ENCODE measurements at regions of chr7 and their contacts with region 1.

Region 1: GRCh38 chr7:139620676-139621344 is 97.3 kb downstream of the CLEC2L start:
- DNase-seq: peak; percentile 69
- ATAC-seq: peak; percentile 78
- H3K4me3 Mint-ChIP-seq: no peak overlapping the region
- H3K27ac Mint-ChIP-seq: no peak overlapping the region
- H3K4me1 Mint-ChIP-seq: peaks cover 10% of the 10 kb centered on the region
- H3K27me3 Mint-ChIP-seq: no peaks in the 10 kb centered on the region

Region 2: GRCh38 chr7:139328375-139328774 is 292.4 kb before region 1 on chr7:
- CTCF ChIA-PET with region 1: no interaction called
- DNase-seq: no peak
- ATAC-seq: no peak
- H3K4me3 Mint-ChIP-seq: no peak overlapping the region
- H3K27ac Mint-ChIP-seq: no peak overlapping the region
- H3K4me1 Mint-ChIP-seq: peaks cover 8% of the 10 kb centered on the region
- H3K27me3 Mint-ChIP-seq: no peaks in the 10 kb centered on the region

Region 3: GRCh38 chr7:139502226-139502625 is 118.6 kb before region 1 on chr7:
- CTCF ChIA-PET with region 1: interaction called, 30 read pairs
- DNase-seq: no peak
- ATAC-seq: no peak
- H3K4me3 Mint-ChIP-seq: no peak overlapping the region
- H3K27ac Mint-ChIP-seq: no peak overlapping the region
- H3K4me1 Mint-ChIP-seq: peaks cover 6% of the 10 kb centered on the region
- H3K27me3 Mint-ChIP-seq: peaks cover 12% of the 10 kb centered on the region

Region 4: DNA sequence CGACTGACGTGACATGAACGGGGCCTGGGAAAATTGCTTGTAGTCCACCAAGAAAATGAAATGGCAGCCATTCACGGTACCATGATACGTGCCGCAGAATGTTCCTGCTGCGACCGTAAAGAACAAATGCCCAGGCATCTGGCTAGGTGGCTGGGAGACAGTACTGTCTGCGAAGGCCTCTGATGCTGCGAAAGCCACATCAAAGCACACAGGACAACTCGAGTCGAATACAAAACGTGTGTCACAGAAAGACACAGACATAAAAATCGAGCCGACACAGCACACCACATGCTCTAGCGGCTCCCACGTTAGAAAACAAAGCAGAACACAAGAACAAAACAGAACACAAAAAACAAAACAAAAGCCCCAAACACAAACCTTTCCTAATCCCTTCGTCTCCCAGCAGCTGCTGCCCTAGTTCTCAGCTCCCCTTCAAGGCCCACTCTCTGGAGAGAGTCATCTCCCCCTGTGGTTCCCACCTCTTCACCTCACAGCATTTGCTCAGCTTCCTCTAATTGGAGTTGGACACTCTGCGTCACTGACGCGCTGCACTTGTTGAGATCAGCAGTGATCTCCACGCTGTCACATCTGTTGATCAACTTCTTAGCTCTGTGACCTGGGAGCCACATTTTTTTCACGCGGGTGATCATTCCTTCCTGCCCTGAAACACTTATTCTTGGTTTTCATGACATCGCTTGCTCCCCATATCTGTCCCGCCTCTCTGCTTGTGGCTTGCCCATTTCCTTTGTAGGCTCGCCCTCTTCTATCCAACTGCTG is 14.9 kb after region 1 on chr7:
- CTCF ChIA-PET with region 1: interaction called, 13 read pairs
- DNase-seq: peak; percentile 90
- ATAC-seq: peak; percentile 97
- H3K4me3 Mint-ChIP-seq: peak overlapping the region; percentile 66
- H3K27ac Mint-ChIP-seq: peak overlapping the region; percentile 93
- H3K4me1 Mint-ChIP-seq: peaks cover 28% of the 10 kb centered on the region
- H3K27me3 Mint-ChIP-seq: no peaks in the 10 kb centered on the region

Region 5: GRCh38 chr7:139680676-139681462 is 60.1 kb after region 1 on chr7:
- CTCF ChIA-PET with region 1: no interaction called
- DNase-seq: peak; percentile 91
- ATAC-seq: peak; percentile 81
- H3K4me3 Mint-ChIP-seq: peak overlapping the region; percentile 49
- H3K27ac Mint-ChIP-seq: peak overlapping the region; percentile 91
- H3K4me1 Mint-ChIP-seq: peaks cover 66% of the 10 kb centered on the region
- H3K27me3 Mint-ChIP-seq: no peaks in the 10 kb centered on the region

Measured in activated CD8-positive, alpha-beta memory T cell treated with anti-CD3 and anti-CD28 coated beads, Interleukin-2, amount 10 ng/mL, durations not matched to agents 7 days and 5 days (primary cell).